ENCODE measurements at regions of chr6 and their contacts with region 1.

Region 1: GRCh38 chr6:105344881-105345370 is 58.0 kb downstream of the PREP start:
- DNase-seq: no peak
- H3K4me3 ChIP-seq: no peak overlapping the region
- CTCF ChIP-seq: no peak
- POLR2A ChIP-seq: no peak

Region 2: GRCh38 chr6:105318660-105319059 is 26.3 kb before region 1 on chr6:
- intact Hi-C with region 1: loop called (anchors 1 kb)
- DNase-seq: no peak
- H3K4me3 ChIP-seq: no peak overlapping the region
- CTCF ChIP-seq: no peak
- POLR2A ChIP-seq: no peak